ENCODE measurements at regions of chr11 and their contacts with region 1.

Region 1: DNA sequence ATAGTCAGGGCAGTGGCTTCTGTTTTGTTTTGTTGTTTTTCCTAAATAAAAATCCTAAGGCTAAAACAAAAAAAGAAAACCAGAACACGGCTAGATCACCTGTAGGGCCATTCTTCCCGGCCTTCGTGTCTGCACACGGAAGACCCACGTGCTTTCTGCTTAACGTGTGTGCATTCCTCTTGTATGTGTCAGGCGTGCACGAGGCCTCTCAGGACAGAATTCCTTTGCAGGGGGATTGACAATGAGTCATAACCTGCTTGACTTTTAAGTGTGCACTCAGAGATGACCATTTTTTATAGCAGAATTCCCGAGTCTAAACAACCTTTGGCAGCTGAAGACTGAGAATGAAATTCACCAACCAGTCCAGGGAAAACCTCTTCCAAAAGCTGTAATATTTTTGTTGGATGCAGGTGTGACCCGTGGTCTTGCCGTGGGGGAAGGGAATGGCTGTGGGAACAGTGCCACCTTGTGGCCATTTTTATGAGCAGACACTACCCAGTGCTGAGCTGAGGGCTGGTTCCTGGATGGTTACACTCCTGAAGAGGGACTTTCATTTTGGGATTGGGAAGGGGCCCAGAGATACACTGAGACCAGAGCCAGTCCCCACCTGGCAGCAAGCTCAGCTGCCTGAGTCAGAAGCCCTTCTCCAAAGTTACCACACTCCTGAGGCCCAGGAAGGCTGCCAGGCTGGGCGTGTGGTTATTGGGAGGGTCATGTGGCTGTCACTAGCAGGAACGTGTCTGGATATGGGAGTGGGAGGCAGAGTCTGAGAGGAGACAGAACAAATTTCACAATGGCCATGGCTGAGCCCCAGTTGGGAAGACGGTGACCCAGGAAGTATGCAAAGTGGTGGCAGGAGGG is 35.8 kb upstream of the DKK3 start:
- DNase-seq: peak; percentile 81 to 91 (median 83)
- H3K4me3 ChIP-seq: peak overlapping the region in 1 of 4 donors; percentile 6
- H3K27ac ChIP-seq: peak overlapping the region in 3 of 5 donors; percentile 34 to 75 (median 48)
- H3K4me1 ChIP-seq: peaks cover 7 to 13% of the 10 kb centered on the region in 2 donors
- H3K27me3 ChIP-seq: no peaks in the 10 kb centered on the region
- CTCF ChIP-seq: peak; percentile 93 to 98 (median 96)
- POLR2A ChIP-seq: peak in 1 of 2 donors; percentile 33

Region 2: DNA sequence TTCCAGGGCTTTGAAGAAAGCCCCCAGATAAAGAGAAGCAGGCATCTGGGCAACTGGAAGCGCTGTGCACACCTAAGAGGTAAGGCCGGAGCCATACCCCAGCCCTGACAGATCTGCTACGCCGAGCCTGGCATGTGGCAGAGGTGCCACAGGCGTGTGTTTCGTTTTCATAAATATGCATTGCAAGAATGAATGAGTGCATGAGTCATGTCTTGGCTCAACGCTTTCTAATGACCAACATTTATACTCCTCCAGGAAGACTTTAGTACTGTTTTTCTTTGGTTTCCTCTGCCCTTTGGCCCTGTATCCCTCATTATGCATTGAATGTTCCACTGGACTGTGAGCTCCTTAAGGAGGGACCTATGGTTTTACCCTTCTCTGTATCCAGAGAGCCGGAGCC is 652.4 kb before region 1 on chr11:
- intact Hi-C with region 1: no loop called
- DNase-seq: no peak
- H3K4me3 ChIP-seq: no peak overlapping the region
- H3K27ac ChIP-seq: no peak overlapping the region
- H3K4me1 ChIP-seq: no peaks in the 10 kb centered on the region
- H3K27me3 ChIP-seq: no peaks in the 10 kb centered on the region
- CTCF ChIP-seq: no peak
- POLR2A ChIP-seq: no peak

Region 3: GRCh38 chr11:11787305-11788062 is 256.7 kb before region 1 on chr11:
- intact Hi-C with region 1: loop called in 1 of 2 experiments (anchors 10 kb)
- DNase-seq: peak; percentile 55 to 90 (median 76)
- H3K4me3 ChIP-seq: no peak overlapping the region
- H3K27ac ChIP-seq: no peak overlapping the region
- H3K4me1 ChIP-seq: no peaks in the 10 kb centered on the region
- H3K27me3 ChIP-seq: no peaks in the 10 kb centered on the region
- CTCF ChIP-seq: peak; percentile 76 to 92 (median 88)
- POLR2A ChIP-seq: no peak

Region 4: DNA sequence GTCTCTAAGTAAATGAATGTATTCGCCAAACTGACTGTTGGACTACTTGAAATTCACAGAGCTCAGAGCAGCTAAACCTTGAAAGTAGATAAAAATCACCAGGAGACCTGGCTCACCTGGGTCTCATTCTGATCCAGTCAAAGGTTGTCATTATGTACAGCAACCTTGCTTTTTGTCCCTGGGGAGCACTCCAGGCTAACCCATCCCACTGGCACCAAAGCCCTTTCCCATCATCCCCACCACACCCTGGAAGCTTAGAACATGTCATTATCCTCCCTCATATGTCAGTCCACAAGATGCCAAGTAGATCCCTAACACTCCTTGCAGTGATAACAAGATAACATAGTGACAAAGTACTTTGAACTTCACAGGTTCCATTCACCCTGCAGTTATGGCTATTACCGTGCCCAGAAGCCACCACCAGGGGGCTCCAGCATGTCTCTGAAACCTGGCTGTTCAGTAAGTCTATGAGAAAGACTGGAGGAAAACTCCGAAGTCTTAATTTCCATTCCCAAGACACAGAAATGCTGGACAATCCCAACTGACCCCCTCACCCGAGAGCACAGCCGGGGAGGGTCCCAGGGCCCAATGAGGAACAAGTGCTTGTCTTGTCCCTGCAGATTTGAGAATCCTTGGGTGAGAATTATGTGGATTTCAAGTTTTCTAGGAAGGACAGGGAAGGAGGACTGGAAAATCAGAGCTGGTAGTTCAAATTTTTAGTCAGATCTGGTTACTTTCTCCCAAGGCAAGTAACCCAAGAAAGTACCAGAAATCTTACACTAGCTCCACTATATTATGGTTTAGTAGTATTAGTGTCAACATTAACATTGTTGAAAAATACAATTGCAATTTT is 245.4 kb before region 1 on chr11:
- intact Hi-C with region 1: loop called in 1 of 2 experiments (anchors 5 kb)
- DNase-seq: peak; percentile 63 to 95 (median 83)
- H3K4me3 ChIP-seq: no peak overlapping the region
- H3K27ac ChIP-seq: no peak overlapping the region
- H3K4me1 ChIP-seq: no peaks in the 10 kb centered on the region
- H3K27me3 ChIP-seq: peaks cover 11% of the 10 kb centered on the region
- CTCF ChIP-seq: peak; percentile 62 to 91 (median 88)
- POLR2A ChIP-seq: no peak

Region 5: GRCh38 chr11:11931461-11932055 is 112.6 kb before region 1 on chr11:
- intact Hi-C with region 1: loop called (anchors 5 to 10 kb)
- DNase-seq: peak; percentile 20 to 53 (median 30)
- H3K4me3 ChIP-seq: no peak overlapping the region
- H3K27ac ChIP-seq: no peak overlapping the region
- H3K4me1 ChIP-seq: peaks cover 6 to 9% of the 10 kb centered on the region in 2 donors
- H3K27me3 ChIP-seq: no peaks in the 10 kb centered on the region
- CTCF ChIP-seq: peak; percentile 28 to 80 (median 72)
- POLR2A ChIP-seq: no peak

Region 6: GRCh38 chr11:12235947-12236743 is 192.0 kb after region 1 on chr11:
- intact Hi-C with region 1: loop called in 1 of 2 experiments (anchors 2 kb)
- DNase-seq: peak in 2 of 7 donors; percentile 22 to 34
- H3K4me3 ChIP-seq: no peak overlapping the region
- H3K27ac ChIP-seq: peak overlapping the region in 2 of 5 donors; percentile 7 to 68
- H3K4me1 ChIP-seq: peaks cover 0 to 4% of the 10 kb centered on the region in 2 donors
- H3K27me3 ChIP-seq: no peaks in the 10 kb centered on the region
- CTCF ChIP-seq: peak; percentile 59 to 81 (median 74)
- POLR2A ChIP-seq: no peak

Region 7: GRCh38 chr11:12281571-12282478 is 237.6 kb after region 1 on chr11:
- intact Hi-C with region 1: loop called (anchors 2 to 5 kb)
- DNase-seq: peak; percentile 78 to 96 (median 89)
- H3K4me3 ChIP-seq: no peak overlapping the region
- H3K27ac ChIP-seq: no peak overlapping the region
- H3K4me1 ChIP-seq: no peaks in the 10 kb centered on the region
- H3K27me3 ChIP-seq: no peaks in the 10 kb centered on the region
- CTCF ChIP-seq: peak; percentile 95 to 99 (median 98)
- POLR2A ChIP-seq: no peak